ENCODE measurements at regions of chr6 and their contacts with region 1.

Region 1: DNA sequence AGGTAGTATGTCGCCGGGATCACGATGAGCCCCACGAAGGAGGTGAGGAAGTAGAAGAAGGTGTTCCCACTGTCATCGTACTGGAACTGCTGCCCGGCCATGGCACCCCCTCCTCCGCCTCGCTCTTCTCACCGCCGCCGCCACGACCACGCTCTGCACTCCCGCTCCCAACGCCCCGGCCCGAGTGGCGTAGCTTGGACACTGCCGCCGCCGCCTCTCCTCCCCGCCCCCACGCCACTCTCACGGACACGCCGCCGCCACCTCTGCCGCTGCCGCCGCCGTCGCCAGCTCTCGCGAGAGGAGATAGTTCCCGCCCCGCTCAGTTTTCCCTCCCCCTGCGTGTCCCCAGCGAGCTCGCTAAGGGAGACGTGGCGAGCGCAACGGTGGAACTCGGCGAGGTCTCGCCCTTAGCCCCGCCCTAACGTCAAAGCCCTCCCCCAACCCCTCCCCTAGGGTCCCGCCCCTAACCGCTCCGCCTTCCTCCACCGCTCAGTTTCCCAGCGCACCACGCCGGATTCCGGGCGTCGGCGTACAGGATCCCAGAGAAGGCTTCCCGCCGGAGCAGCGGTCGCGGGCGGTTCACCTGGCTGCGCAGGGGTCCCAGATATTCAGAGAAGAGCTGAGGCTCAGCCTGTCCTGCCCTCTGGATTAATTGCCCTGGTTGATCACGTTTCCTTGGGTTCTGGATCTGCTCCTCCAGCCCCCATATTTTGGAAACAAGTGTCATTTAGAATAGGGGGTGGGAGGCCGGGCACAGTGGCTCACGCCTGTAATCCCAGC is at the start of gene SEC63:
- DNase-seq: peak; percentile 96
- H3K4me3 Mint-ChIP-seq: peak within 1 kb of the TSS; percentile 88
- H3K27ac Mint-ChIP-seq: peak within 1 kb of the TSS; percentile 94
- H3K4me1 Mint-ChIP-seq: peaks cover 8% of the 10 kb centered on the region
- H3K27me3 Mint-ChIP-seq: no peaks in the 10 kb centered on the region
- CTCF ChIP-seq: no peak
- total RNA-seq, gene SEC63: 204 and 264 TPM in 2 replicates

Region 2: DNA sequence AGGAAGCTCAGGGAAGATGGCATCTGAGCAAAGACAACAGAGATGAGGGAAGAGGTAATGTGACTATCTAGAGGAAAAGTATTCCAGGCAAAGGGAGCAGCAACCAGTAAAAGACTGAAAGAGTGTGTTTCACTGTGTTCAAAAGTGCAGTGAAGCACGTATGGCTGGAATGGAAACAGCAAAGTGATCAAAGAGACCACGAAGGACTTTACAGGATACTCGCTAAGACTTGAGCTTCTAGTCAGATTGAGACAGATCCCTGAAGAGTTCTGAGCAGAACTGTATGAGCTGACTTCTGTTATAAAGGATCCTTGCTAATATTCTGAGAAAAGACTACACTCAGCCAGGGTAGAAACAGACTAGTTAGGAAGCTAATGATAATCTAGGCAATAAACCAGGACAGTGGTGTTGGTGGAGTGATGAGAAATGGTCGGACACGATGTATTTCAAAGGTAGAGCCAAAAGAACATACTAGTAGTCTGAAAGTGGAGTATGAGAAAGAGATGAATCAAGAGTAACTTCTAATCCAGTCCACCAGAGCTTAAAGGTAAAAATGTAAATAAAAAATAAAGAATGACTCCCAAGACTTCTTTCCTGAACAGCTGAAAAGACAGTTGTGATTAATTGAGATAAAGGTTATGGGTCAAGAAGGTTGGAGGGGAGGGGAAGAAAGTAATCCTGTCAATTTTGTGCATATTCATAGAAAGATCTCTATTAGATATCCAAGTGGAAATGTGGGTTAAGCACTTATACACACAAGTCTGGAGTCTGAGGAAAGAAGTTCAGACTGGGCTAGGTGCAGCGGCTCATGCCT is 14.3 kb before region 1 on chr6:
- CTCF ChIA-PET with region 1: interaction called, 3 read pairs
- POLR2A ChIA-PET with region 1: interaction called, 10 read pairs
- intact Hi-C with region 1: no loop called
- DNase-seq: no peak
- H3K4me3 Mint-ChIP-seq: no peak overlapping the region
- H3K27ac Mint-ChIP-seq: no peak overlapping the region
- H3K4me1 Mint-ChIP-seq: peaks cover 33% of the 10 kb centered on the region
- H3K27me3 Mint-ChIP-seq: no peaks in the 10 kb centered on the region
- CTCF ChIP-seq: no peak

Measured in MCF 10A (cell line).